ENCODE measurements at regions of chr1 and their contacts with region 1.

Region 1: DNA sequence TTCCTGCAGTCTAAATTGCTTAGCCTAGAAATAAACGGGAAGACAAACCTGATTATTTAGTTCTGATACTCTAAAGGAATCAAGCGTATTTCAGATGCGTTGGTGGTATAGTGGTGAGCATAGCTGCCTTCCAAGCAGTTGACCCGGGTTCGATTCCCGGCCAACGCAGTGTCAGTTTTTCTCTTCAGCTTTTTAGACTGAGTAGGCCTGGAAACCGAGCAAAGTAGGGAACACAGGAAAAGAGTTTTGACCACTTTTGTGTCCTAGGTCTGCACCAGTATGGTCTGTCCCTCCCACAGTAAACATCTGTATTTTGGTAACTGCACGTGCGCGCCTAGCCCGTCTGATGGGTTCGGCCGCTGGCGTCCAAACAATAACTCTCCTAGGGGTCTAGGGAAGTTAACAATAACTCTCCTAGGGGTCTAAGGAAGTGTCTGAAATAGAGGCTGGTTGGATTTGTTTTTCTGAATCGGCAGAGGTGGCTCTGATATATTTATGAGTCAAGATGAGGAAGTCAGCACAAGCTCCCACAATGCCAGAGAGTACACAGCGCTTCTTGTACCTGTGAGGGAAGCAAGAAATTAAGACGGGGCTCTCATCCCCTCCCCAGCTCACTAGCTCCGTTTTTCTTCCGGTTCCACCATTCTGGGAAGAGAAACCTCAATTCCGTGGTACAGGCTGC is 15.6 kb upstream of the HJV start:
- DNase-seq: peak; percentile 39 to 92 (median 53)
- ATAC-seq: peak; percentile 65
- H3K4me3 ChIP-seq: peak overlapping the region; percentile 78
- H3K27ac ChIP-seq: peak overlapping the region; percentile 96
- H3K4me1 ChIP-seq: peaks cover 5 to 8% of the 10 kb centered on the region in 2 experiments; a peak in 3 of 5 replicates
- H3K27me3 ChIP-seq: no peaks in the 10 kb centered on the region
- CTCF ChIP-seq: no peak
- EP300 ChIP-seq: peak; percentile 75
- POLR2A ChIP-seq: no peak
- RAD21 ChIP-seq: peak in 1 of 2 experiments; percentile 9; a peak in 1 of 4 replicates

Region 2: DNA sequence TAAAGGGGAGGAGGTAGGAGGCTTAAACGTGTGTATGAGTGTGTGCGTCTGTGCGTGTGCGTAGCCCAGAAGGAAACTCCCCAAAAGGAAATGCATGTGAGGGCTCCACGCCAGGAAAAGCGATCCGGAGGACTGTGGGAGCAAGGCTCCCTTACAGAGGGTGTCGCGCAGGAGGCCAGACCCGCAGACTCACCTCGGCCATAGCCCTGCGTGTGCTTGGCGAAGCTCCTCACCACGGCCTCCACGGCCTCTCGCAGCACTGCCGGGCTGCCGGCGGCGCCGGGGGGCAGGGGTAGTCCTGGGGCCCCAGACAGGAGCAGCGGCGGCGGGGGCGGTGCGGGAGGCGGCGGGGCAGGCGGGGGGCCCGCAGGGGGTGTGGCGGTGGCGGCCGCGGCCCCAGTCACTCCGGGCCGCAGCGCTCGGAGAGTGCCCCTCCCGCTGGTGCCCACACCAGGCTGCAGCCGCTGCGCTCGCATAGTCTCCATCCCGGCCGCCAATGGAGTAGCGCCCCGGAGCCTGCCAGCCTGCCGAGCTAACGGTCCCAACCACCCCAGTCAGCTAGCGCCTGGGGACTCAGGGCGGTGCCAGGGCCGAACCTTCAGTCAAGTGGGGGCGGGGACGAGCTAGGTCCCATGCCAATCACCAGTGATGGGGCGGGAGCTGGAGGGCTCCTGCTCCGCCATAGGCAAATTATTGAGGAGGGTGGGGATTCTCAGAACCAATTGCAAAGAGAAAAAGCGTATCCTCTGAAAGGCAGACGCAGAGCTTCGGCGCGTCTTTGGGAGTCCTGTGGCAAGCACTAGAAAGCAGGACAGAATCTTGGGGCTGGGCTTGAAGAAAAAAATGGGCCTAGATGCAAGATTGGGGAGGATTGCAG is 79.4 kb before region 1 on chr1 and contains the start of gene LIX1L:
- CTCF ChIA-PET with region 1: no interaction called
- POLR2A ChIA-PET with region 1: interaction called, 17 read pairs
- in situ Hi-C with region 1: no loop called
- intact Hi-C with region 1: no loop called
- DNase-seq: peak; percentile 87 to 97 (median 92)
- ATAC-seq: peak; percentile 97
- H3K4me3 ChIP-seq: peak within 1 kb of the TSS; percentile 79
- H3K27ac ChIP-seq: peak within 1 kb of the TSS; percentile 74
- H3K4me1 ChIP-seq: peaks cover 25 to 30% of the 10 kb centered on the region in 2 experiments; a peak in 4 of 5 replicates
- H3K27me3 ChIP-seq: no peaks in the 10 kb centered on the region; a peak in 1 of 5 replicates
- CTCF ChIP-seq: no peak
- EP300 ChIP-seq: no peak; the same call in 1 of the 2 replicates
- POLR2A ChIP-seq: peak; percentile 69
- RAD21 ChIP-seq: no peak
- polyA plus RNA-seq, gene LIX1L: 4.6 to 9.2 TPM

Region 3: GRCh38 chr1:146020058-146021049 is 16.8 kb before region 1 on chr1:
- CTCF ChIA-PET with region 1: interaction called, 3 read pairs
- POLR2A ChIA-PET with region 1: interaction called, 21 read pairs
- in situ Hi-C with region 1: no loop called
- intact Hi-C with region 1: no loop called
- DNase-seq: no peak
- ATAC-seq: peak; percentile 34; the same call in 2 of the 3 replicates
- H3K4me3 ChIP-seq: peak overlapping the region; percentile 22; the same call in 1 of the 2 replicates
- H3K27ac ChIP-seq: peak overlapping the region; percentile 80; the same call in 1 of the 3 replicates
- H3K4me1 ChIP-seq: peaks cover 9 to 30% of the 10 kb centered on the region in 2 experiments
- H3K27me3 ChIP-seq: no peaks in the 10 kb centered on the region
- CTCF ChIP-seq: peak in 2 of 3 experiments; percentile 20 to 21; a peak in 2 of 6 replicates
- EP300 ChIP-seq: no peak
- POLR2A ChIP-seq: no peak
- RAD21 ChIP-seq: no peak